ENCODE measurements at regions of chr2 and their contacts with region 1.

Region 1: GRCh38 chr2:219294356-219295351 is 14.5 kb downstream of the PTPRN start:
- DNase-seq: peak; percentile 70
- H3K4me3 ChIP-seq: peak overlapping the region in 2 of 3 experiments; percentile 46 to 55
- H3K27ac ChIP-seq: no peak overlapping the region
- H3K4me1 ChIP-seq: peaks cover 17% of the 10 kb centered on the region
- H3K27me3 ChIP-seq: no peaks in the 10 kb centered on the region
- CTCF ChIP-seq: peak; percentile 91 to 92

Region 2: DNA sequence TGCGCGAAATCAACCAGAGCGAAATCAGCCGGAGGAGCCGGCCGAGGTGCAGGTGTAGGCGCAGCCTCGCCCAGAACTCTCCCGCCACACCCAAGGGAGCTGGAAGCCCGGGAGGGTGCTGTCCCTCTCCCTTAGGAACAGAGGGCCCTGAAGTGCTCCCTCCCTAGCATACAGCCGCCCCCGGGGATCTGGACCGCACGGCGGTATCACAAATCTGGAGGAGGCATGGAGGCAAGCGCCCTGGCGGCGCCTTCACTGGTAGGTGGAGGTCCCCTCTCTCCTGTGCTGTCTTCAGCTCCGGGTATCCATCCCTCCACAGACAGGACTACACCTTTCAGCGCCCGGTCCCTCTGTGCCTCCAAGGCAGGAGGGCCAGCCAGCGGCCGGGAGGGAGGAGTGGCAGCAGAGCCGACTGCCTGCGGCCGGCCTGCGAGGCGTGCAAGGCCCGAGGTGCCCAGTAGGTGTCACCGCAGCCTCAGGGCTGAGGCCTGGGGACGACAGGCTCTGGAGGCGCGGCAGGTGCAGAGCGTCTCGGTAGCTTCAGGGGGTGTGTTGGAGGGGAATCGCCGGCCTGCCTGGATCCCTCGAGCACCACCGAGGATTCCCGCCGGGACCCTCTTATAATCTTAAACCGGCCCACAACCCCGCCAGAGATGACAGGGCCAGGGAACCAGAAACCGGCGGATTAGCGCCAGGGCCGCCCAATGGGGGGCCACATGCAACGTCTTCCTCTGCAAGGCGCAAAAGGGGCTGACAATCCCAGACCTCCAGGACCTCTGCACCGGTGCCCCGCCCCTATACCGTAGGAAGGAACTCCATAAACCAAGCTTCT is 236.7 kb before region 1 on chr2:
- CTCF ChIA-PET with region 1: no interaction called
- dilution Hi-C with region 1: no loop called
- in situ Hi-C with region 1: no loop called
- intact Hi-C with region 1: loop called (anchors 5 kb)
- DNase-seq: peak; percentile 44
- H3K4me3 ChIP-seq: no peak overlapping the region
- H3K27ac ChIP-seq: no peak overlapping the region
- H3K4me1 ChIP-seq: peaks cover 24% of the 10 kb centered on the region
- H3K27me3 ChIP-seq: peaks cover 53% of the 10 kb centered on the region
- CTCF ChIP-seq: peak; percentile 63 to 78

Region 3: DNA sequence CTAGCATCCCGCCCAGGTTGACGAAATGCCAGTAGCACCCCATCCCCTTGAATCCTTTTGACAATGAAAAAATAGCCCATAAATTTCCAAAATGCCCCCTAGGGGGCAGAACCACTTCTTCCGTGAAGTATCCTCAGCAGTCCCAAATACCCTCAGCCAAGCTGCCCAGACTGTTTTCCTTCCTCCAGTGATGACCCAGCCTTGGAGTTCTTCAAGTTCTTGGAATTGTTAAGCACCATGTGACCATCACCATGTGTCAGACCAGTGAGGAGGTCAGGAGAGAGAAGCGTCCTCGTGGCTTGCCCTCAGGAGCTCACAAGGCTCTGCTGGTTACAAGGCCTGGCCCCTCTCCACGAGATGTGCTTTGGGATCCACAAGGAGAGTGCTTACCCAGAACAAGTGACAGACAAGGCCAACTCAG is 123.4 kb before region 1 on chr2:
- CTCF ChIA-PET with region 1: no interaction called
- dilution Hi-C with region 1: no loop called
- in situ Hi-C with region 1: loop called (anchors 10 kb)
- intact Hi-C with region 1: loop called (anchors 1 kb)
- DNase-seq: peak; percentile 23
- H3K4me3 ChIP-seq: no peak overlapping the region
- H3K27ac ChIP-seq: no peak overlapping the region
- H3K4me1 ChIP-seq: peaks cover 8% of the 10 kb centered on the region
- H3K27me3 ChIP-seq: no peaks in the 10 kb centered on the region
- CTCF ChIP-seq: peak; percentile 61 to 67

Region 4: DNA sequence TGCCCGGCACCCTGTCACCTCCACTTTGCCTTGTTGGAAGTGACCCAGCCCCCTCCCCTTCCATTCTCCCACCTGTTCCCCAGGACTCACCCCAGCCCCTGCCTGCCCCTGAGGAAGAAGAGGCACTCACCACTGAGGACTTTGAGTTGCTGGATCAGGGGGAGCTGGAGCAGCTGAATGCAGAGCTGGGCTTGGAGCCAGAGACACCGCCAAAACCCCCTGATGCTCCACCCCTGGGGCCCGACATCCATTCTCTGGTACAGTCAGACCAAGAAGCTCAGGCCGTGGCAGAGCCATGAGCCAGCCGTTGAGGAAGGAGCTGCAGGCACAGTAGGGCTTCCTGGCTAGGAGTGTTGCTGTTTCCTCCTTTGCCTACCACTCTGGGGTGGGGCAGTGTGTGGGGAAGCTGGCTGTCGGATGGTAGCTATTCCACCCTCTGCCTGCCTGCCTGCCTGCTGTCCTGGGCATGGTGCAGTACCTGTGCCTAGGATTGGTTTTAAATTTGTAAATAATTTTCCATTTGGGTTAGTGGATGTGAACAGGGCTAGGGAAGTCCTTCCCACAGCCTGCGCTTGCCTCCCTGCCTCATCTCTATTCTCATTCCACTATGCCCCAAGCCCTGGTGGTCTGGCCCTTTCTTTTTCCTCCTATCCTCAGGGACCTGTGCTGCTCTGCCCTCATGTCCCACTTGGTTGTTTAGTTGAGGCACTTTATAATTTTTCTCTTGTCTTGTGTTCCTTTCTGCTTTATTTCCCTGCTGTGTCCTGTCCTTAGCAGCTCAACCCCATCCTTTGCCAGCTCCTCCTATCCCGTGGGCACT is 112.1 kb before region 1 on chr2:
- CTCF ChIA-PET with region 1: no interaction called
- dilution Hi-C with region 1: no loop called
- in situ Hi-C with region 1: no loop called
- intact Hi-C with region 1: no loop called
- DNase-seq: no peak
- H3K4me3 ChIP-seq: no peak overlapping the region
- H3K27ac ChIP-seq: no peak overlapping the region
- H3K4me1 ChIP-seq: peaks cover 13% of the 10 kb centered on the region
- H3K27me3 ChIP-seq: no peaks in the 10 kb centered on the region
- CTCF ChIP-seq: no peak

Region 5: GRCh38 chr2:219229305-219230058 is 65.2 kb before region 1 on chr2 and contains the starts of genes ANKZF1 and ATG9A:
- CTCF ChIA-PET with region 1: no interaction called
- dilution Hi-C with region 1: no loop called
- in situ Hi-C with region 1: no loop called
- intact Hi-C with region 1: loop called (anchors 1 kb)
- DNase-seq: peak; percentile 100
- H3K4me3 ChIP-seq: peak within 1 kb of the TSS; percentile 79 to 94 (median 92)
- H3K27ac ChIP-seq: peak within 1 kb of the TSS; percentile 93
- H3K4me1 ChIP-seq: peaks cover 17% of the 10 kb centered on the region
- H3K27me3 ChIP-seq: no peaks in the 10 kb centered on the region
- CTCF ChIP-seq: no peak
- total RNA-seq, gene ANKZF1: 29.2 to 52.9 TPM
- total RNA-seq, gene ATG9A: 60.4 to 74.5 TPM

Region 6: DNA sequence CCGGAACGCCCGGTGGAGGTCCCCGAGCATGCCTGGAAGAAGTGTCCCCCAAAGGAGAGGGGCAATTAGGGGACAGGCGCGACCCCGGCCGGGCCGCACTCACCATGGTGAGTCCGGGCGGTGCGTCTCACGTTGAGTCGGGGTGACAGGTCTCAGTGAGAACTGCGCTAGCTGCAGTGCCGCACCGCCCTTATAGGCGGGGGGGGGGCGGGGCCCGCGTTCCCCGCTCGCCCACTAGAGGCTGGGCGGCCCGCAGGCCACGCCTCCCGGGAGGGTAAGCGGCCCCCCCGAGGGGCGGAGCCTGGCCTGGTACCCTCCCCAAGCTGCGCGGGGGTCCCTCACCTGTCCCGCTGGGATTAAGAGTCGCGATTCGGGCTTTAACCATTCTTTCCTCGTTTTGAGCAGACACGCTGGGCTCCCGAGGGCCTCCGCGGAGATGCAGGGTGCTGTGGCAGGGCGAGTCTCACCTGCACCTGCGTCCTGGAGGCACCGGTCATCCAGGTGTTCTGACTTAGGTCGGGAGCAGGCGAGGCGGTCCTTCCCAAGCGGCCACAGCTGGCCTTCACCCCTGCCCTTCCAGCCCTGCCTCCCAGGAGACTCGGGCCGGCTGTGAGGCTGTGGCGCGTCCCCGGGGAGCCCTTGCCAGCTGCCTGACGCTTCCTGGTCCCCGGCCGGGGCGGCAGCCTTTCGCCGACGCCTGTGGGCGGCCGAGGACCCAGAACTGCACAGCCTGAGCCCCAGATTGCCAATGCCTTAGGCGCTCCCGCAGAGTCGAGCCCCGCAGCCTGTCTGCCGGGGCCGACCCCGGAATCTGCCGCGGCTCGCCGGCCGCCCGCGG is 40.7 kb before region 1 on chr2 and contains the start of gene TUBA4A:
- CTCF ChIA-PET with region 1: interaction called, 3 read pairs
- dilution Hi-C with region 1: loop called (anchors 5 kb)
- in situ Hi-C with region 1: no loop called
- intact Hi-C with region 1: loop called (anchors 1 kb)
- DNase-seq: peak; percentile 83
- H3K4me3 ChIP-seq: peak within 1 kb of the TSS; percentile 69 to 82 (median 81)
- H3K27ac ChIP-seq: peak within 1 kb of the TSS; percentile 76
- H3K4me1 ChIP-seq: peaks cover 48% of the 10 kb centered on the region
- H3K27me3 ChIP-seq: no peaks in the 10 kb centered on the region
- CTCF ChIP-seq: peak in 1 of 2 donors; percentile 12
- total RNA-seq, gene TUBA4A: 206 to 209 TPM

Region 7: GRCh38 chr2:219344751-219345430 is 50.2 kb after region 1 on chr2:
- CTCF ChIA-PET with region 1: no interaction called
- dilution Hi-C with region 1: loop called (anchors 5 kb)
- in situ Hi-C with region 1: no loop called
- intact Hi-C with region 1: no loop called
- DNase-seq: no peak
- H3K4me3 ChIP-seq: no peak overlapping the region
- H3K27ac ChIP-seq: no peak overlapping the region
- H3K4me1 ChIP-seq: no peaks in the 10 kb centered on the region
- H3K27me3 ChIP-seq: no peaks in the 10 kb centered on the region
- CTCF ChIP-seq: no peak

Region 8: GRCh38 chr2:219433666-219434467 is 139.2 kb after region 1 on chr2:
- CTCF ChIA-PET with region 1: no interaction called
- dilution Hi-C with region 1: no loop called
- in situ Hi-C with region 1: no loop called
- intact Hi-C with region 1: no loop called
- DNase-seq: no peak
- H3K4me3 ChIP-seq: no peak overlapping the region
- H3K27ac ChIP-seq: no peak overlapping the region
- H3K4me1 ChIP-seq: peaks cover 6% of the 10 kb centered on the region
- H3K27me3 ChIP-seq: no peaks in the 10 kb centered on the region
- CTCF ChIP-seq: peak; percentile 33 to 38

Region 9: GRCh38 chr2:219530048-219530963 is 235.7 kb after region 1 on chr2:
- CTCF ChIA-PET with region 1: no interaction called
- dilution Hi-C with region 1: no loop called
- in situ Hi-C with region 1: no loop called
- intact Hi-C with region 1: loop called (anchors 2 kb)
- DNase-seq: peak; percentile 57
- H3K4me3 ChIP-seq: no peak overlapping the region
- H3K27ac ChIP-seq: no peak overlapping the region
- H3K4me1 ChIP-seq: no peaks in the 10 kb centered on the region
- H3K27me3 ChIP-seq: peaks cover 2% of the 10 kb centered on the region
- CTCF ChIP-seq: peak; percentile 93 to 99